CD8-positive, alpha-beta T cell (primary cell): ENCODE measurements at regions of chr6 and their contacts with region 1.

Region 1: GRCh38 chr6:110039364-110039980 is 61.4 kb downstream of the GPR6 start:
- DNase-seq: peak; percentile 63 to 89 (median 79)
- ATAC-seq: peak; percentile 70
- H3K4me3 ChIP-seq: peak overlapping the region; percentile 49 to 57
- H3K4me3 Mint-ChIP-seq: peak overlapping the region; percentile 89
- H3K27ac ChIP-seq: peak overlapping the region; percentile 39 to 75
- H3K27ac Mint-ChIP-seq: peak overlapping the region; percentile 95
- H3K4me1 ChIP-seq: peaks cover 9% of the 10 kb centered on the region
- H3K4me1 Mint-ChIP-seq: peaks cover 22% of the 10 kb centered on the region
- H3K27me3 ChIP-seq: no peaks in the 10 kb centered on the region
- H3K27me3 Mint-ChIP-seq: no peaks in the 10 kb centered on the region
- CTCF ChIP-seq: peak; percentile 75

Region 2: DNA sequence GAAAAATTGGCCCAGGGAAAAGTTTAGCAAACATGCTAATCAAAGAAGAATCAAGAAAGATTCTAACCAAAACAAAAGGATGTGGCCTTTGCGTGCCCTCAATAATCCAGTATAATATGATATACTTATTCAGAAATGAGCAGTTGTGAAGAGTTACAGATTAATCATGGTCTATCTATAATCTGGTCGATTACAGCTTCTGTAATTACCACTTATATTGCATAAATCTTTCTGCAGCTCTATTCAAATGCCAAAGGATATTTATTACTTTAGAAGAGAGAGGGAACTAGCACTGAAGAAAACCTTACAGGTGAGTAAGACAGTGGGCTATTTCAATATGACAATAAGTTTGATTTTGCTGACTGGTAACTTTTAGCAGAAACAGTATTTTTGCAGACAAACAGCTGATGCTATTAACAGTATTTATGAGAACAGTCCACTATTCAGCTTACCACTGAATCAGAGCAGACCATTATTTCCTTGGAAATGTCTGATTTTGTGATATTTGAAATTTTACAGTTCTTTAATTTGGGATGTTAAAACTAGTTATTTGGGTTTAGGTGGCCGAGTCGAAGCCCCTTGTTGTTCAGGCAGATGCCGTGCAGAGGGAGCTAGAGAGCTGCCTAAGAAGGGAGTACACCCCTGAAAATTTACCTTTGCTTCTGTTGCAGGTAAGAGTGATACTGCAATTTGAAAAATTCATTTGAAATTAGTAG is 851.9 kb before region 1 on chr6:
- CTCF ChIA-PET with region 1: interaction called, 9 read pairs
- POLR2A ChIA-PET with region 1: no interaction called
- intact Hi-C with region 1: loop called in 1 of 2 experiments (anchors 2 kb)
- DNase-seq: peak; percentile 24 to 75 (median 64)
- ATAC-seq: peak; percentile 96
- H3K4me3 ChIP-seq: no peak overlapping the region
- H3K4me3 Mint-ChIP-seq: no peak overlapping the region
- H3K27ac ChIP-seq: no peak overlapping the region
- H3K27ac Mint-ChIP-seq: no peak overlapping the region
- H3K4me1 ChIP-seq: no peaks in the 10 kb centered on the region
- H3K4me1 Mint-ChIP-seq: peaks cover 2% of the 10 kb centered on the region
- H3K27me3 ChIP-seq: peaks cover 3 to 6% of the 10 kb centered on the region in 2 experiments
- H3K27me3 Mint-ChIP-seq: peaks cover 11% of the 10 kb centered on the region
- CTCF ChIP-seq: peak; percentile 88

Region 3: DNA sequence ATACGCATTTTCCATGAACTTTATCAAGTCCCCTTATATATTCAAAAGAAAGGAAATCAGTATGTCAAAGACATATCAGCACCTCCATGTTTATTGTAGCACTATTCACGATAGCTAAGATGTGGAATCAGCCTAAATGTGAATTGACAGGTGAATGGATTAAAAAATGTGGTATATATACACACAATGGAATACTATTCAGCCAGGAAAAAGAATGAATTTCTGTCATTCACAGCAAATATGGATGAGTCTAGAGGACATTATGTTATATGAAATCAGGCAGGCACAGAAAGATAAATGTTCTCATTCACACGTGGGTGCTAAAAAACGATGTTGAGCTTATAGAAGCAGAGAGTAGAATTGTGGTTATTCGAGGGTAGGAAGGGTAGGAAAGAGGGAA is 343.1 kb before region 1 on chr6:
- CTCF ChIA-PET with region 1: interaction called, 18 read pairs
- POLR2A ChIA-PET with region 1: interaction called, 12 read pairs
- intact Hi-C with region 1: no loop called
- DNase-seq: no peak
- ATAC-seq: no peak
- H3K4me3 ChIP-seq: no peak overlapping the region
- H3K4me3 Mint-ChIP-seq: no peak overlapping the region
- H3K27ac ChIP-seq: no peak overlapping the region
- H3K27ac Mint-ChIP-seq: no peak overlapping the region
- H3K4me1 ChIP-seq: peaks cover 17% of the 10 kb centered on the region
- H3K4me1 Mint-ChIP-seq: peaks cover 20% of the 10 kb centered on the region
- H3K27me3 ChIP-seq: no peaks in the 10 kb centered on the region
- H3K27me3 Mint-ChIP-seq: no peaks in the 10 kb centered on the region
- CTCF ChIP-seq: no peak

Region 4: DNA sequence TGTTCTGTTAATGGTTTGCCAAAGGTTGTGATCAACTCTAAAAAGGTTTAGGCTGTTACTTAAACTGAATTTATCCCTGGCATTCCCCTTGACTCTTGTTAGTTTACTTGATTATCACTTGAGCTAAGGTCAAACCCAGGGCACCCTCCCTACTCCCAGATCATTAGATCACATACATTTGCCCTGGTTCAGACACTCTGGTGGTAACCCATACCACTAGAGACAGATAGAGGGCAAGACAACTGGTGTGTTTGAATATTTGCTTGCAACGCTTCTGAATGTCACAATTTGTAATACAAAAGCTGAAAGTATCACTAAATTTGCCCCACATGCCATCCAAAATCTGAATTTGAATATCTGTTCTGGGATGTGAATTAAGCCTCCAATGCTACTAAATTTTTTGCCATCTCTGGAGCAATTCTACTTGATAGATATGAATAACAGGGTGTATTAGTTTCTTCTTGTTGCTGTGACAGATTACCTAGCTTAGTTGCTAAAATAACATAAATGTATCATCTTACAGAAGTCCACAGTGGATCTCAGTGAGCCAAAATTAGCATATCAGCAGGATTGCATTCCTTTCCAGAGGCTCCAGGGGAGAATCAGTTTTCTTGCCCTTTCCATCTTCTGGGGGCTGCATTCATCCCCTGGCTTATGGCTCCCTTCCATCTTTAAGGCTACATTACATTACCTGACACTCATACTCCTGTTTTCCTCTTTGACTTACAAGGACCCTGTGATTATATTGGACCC is 303.0 kb before region 1 on chr6:
- CTCF ChIA-PET with region 1: interaction called, 10 read pairs
- POLR2A ChIA-PET with region 1: no interaction called
- intact Hi-C with region 1: no loop called
- DNase-seq: no peak
- ATAC-seq: no peak
- H3K4me3 ChIP-seq: no peak overlapping the region
- H3K4me3 Mint-ChIP-seq: no peak overlapping the region
- H3K27ac ChIP-seq: no peak overlapping the region
- H3K27ac Mint-ChIP-seq: no peak overlapping the region
- H3K4me1 ChIP-seq: no peaks in the 10 kb centered on the region
- H3K4me1 Mint-ChIP-seq: no peaks in the 10 kb centered on the region
- H3K27me3 ChIP-seq: no peaks in the 10 kb centered on the region
- H3K27me3 Mint-ChIP-seq: no peaks in the 10 kb centered on the region
- CTCF ChIP-seq: no peak

Region 5: GRCh38 chr6:110053395-110054240 is 14.1 kb after region 1 on chr6:
- CTCF ChIA-PET with region 1: interaction called, 29 read pairs
- POLR2A ChIA-PET with region 1: no interaction called
- intact Hi-C with region 1: no loop called
- DNase-seq: peak in 2 of 9 experiments; percentile 43 to 56
- ATAC-seq: no peak
- H3K4me3 ChIP-seq: no peak overlapping the region
- H3K4me3 Mint-ChIP-seq: no peak overlapping the region
- H3K27ac ChIP-seq: no peak overlapping the region
- H3K27ac Mint-ChIP-seq: no peak overlapping the region
- H3K4me1 ChIP-seq: no peaks in the 10 kb centered on the region
- H3K4me1 Mint-ChIP-seq: no peaks in the 10 kb centered on the region
- H3K27me3 ChIP-seq: no peaks in the 10 kb centered on the region
- H3K27me3 Mint-ChIP-seq: peaks cover 2% of the 10 kb centered on the region
- CTCF ChIP-seq: peak; percentile 41

Region 6: GRCh38 chr6:110389689-110390382 is 350.4 kb after region 1 on chr6:
- CTCF ChIA-PET with region 1: interaction called, 105 read pairs
- POLR2A ChIA-PET with region 1: interaction called, 13 read pairs
- intact Hi-C with region 1: loop called (anchors 1 to 5 kb)
- DNase-seq: peak in 3 of 9 experiments; percentile 14 to 53 (median 36)
- ATAC-seq: peak; percentile 45
- H3K4me3 ChIP-seq: no peak overlapping the region
- H3K4me3 Mint-ChIP-seq: peak overlapping the region; percentile 35
- H3K27ac ChIP-seq: peak overlapping the region in 1 of 2 experiments; percentile 26
- H3K27ac Mint-ChIP-seq: peak overlapping the region; percentile 93
- H3K4me1 ChIP-seq: peaks cover 33% of the 10 kb centered on the region
- H3K4me1 Mint-ChIP-seq: peaks cover 39% of the 10 kb centered on the region
- H3K27me3 ChIP-seq: no peaks in the 10 kb centered on the region
- H3K27me3 Mint-ChIP-seq: no peaks in the 10 kb centered on the region
- CTCF ChIP-seq: no peak